Right cardiac atrium (tissue), 5 donors: ENCODE measurements at regions of chr20 and their contacts with region 1.

Region 1: DNA sequence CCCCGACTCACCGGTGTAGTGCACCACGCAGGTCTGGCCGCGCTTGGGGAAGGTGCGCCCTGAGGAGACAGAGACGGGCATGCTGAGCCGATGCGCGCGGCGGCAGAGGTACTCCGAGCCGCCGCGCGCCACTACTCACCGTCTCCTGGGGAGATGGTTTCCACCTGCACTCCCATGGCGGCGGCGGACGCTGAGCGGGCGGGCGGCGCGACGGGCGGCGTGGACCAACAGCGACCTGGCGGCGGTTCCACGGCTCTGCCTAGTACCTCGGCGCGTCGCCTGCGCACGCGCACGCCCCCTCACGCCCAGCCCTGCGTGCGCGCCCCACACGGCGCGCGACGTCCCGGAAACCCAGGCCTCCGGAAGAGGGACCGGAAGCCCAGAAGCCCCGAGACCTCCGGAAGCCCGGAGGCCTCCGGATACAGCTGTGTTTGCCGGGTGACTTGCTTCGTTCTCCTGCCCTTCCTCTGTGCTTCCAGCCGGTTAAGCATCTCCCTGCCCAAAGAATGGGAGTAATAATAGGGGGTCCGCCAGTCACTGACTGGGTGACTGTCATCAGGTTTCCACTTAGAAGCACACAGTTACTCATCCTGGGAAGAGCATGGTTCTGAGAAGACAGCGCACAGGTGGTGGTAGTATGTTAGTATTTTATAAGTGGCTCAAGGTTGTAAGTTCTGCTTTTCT is at the start of gene FKBP1A:
- DNase-seq: peak; percentile 94 to 97 (median 97)
- ATAC-seq: peak; percentile 95 to 98
- H3K4me3 ChIP-seq: peak within 1 kb of the TSS; percentile 96
- H3K27ac ChIP-seq: peak within 1 kb of the TSS; percentile 60
- H3K4me1 ChIP-seq: peaks cover 19% of the 10 kb centered on the region
- H3K27me3 ChIP-seq: no peaks in the 10 kb centered on the region
- total RNA-seq, gene FKBP1A: 105 to 162 (median 140) TPM

Region 2: DNA sequence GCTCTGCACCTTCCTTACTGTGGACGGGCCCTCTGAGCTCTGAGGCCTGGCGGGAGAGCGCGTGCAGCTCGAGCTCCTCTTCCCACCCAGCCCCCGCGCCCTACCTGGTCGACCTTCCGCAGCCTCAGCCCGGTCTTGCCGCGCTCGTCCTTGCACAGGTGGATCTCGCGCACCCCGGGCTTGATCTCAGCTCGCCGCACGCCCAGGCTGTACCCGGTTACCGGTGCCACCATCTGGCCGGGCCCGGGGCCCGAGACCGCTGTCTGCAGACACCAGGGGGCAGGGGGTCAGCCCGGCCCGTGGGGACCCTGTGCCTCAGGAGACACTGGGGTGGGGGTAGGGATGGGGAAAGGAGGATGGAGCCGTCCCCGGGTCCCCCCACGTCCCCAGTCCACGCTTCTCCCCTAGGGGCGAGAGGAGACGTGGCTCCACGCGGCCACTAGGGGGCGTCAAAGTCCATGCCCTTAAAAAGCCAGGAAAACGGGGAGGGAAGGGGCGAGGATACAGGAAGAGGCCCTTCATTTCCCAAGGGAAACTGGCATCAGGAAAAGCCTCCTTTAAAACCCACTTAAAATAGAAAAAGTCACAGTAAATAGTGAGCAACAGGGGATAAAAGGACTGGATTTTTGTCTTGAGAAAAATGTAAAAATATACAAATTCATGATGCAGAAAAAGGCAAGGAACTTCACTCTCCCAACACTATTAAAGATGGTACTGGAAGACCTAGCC is 79.6 kb before region 1 on chr20:
- intact Hi-C with region 1: loop called in 1 of 4 experiments (anchors 5 kb)
- DNase-seq: peak; percentile 80 to 90 (median 89)
- ATAC-seq: peak; percentile 83 to 89
- H3K4me3 ChIP-seq: no peak overlapping the region
- H3K27ac ChIP-seq: no peak overlapping the region
- H3K4me1 ChIP-seq: peaks cover 3% of the 10 kb centered on the region
- H3K27me3 ChIP-seq: no peaks in the 10 kb centered on the region

Region 3: DNA sequence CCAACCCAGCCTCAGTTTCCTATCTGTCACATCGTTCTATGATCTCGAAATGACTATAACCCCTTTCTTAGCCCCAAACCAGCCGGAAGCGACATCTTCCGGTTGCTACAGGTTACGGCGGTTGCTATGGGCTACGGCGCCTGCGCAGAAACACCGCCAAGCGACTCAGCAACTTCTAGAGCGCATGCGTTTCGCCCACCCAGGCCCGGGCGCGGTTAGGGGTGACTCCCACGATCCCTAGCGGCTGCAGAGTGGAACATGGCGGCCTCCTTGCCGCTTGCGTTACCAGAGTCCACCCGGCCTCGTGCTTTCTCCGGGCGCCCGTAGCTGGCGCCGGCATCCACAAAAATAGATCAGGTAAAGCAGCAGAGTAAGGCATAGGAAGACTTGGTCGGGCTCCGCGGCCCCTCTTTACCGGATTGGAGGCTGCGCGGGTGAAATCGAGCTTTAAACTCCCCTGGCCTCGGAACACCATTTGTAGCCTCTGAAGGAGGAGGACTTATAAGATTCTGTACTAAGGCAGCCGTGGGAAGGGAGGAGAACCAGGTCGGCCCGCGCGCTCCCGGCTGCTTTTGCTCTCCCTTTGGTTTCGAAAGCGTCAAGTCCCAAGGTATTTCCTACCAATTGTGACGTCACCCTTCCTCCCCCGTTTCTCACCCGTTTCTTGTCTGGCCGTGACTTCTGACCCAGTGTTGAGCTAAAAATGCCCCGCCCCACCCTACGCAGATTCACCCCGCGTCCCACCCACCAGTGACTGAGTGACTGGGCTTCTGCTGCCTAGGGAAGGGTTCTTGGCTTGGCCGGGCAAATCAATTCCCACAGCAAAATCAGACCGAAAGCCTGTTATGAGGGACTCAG is 67.6 kb before region 1 on chr20:
- intact Hi-C with region 1: loop called (anchors 5 kb)
- DNase-seq: peak; percentile 99
- ATAC-seq: peak; percentile 91 to 94
- H3K4me3 ChIP-seq: peak overlapping the region; percentile 82
- H3K27ac ChIP-seq: peak overlapping the region; percentile 98
- H3K4me1 ChIP-seq: peaks cover 28% of the 10 kb centered on the region
- H3K27me3 ChIP-seq: no peaks in the 10 kb centered on the region

Region 4: GRCh38 chr20:1535420-1536175 is 142.6 kb after region 1 on chr20:
- intact Hi-C with region 1: no loop called
- DNase-seq: peak in 2 of 3 donors; percentile 17 to 51
- ATAC-seq: peak; percentile 30 to 42
- H3K4me3 ChIP-seq: no peak overlapping the region
- H3K27ac ChIP-seq: no peak overlapping the region
- H3K4me1 ChIP-seq: no peaks in the 10 kb centered on the region
- H3K27me3 ChIP-seq: no peaks in the 10 kb centered on the region

Region 5: DNA sequence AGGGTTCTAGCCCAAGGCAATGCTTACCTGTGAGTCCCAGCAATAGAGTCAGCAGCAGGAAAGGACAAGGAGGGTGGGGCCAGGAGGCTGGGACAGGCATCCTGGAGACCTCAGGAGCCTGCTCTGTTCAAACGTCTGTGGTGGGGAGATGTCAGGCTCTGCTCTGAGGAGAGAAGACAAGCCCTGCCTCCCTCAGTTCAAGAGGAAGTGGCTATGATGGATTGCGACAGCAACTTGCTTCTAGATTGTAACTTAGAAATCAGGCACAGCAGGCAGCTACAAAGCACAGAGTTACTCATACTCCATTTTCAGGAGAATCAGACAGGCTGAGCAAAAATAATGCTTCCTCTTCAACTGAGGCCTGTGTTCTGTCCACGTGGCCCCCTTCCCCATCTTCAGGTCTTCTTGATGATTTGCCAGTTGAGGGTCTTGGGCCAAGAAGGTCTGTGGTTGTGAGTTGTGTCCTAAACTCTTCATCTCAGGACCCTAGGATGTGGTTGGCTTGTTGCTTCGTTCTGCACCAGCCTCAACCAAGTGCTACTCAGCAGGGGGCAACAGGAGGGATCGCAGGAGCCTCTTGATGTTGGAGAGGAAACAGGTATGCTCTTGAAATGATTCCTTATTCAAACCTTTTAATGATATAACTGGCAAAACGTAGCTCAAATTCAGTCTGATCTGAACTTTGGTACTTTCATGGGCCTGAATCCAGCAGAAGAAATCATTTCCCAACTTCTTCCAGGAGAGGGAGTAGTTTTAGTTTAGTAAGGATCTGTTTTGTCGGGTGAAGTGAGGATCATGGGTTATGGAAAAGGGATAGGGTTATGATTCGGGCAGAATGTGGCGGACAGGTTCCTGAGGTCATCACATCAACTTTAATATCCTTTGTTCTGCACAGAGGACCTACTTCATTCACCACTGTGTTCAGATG is 195.8 kb after region 1 on chr20:
- intact Hi-C with region 1: no loop called
- DNase-seq: no peak
- ATAC-seq: no peak
- H3K4me3 ChIP-seq: no peak overlapping the region
- H3K27ac ChIP-seq: no peak overlapping the region
- H3K4me1 ChIP-seq: no peaks in the 10 kb centered on the region
- H3K27me3 ChIP-seq: no peaks in the 10 kb centered on the region